ENCODE measurements at regions of chr2 and their contacts with region 1.

Region 1: DNA sequence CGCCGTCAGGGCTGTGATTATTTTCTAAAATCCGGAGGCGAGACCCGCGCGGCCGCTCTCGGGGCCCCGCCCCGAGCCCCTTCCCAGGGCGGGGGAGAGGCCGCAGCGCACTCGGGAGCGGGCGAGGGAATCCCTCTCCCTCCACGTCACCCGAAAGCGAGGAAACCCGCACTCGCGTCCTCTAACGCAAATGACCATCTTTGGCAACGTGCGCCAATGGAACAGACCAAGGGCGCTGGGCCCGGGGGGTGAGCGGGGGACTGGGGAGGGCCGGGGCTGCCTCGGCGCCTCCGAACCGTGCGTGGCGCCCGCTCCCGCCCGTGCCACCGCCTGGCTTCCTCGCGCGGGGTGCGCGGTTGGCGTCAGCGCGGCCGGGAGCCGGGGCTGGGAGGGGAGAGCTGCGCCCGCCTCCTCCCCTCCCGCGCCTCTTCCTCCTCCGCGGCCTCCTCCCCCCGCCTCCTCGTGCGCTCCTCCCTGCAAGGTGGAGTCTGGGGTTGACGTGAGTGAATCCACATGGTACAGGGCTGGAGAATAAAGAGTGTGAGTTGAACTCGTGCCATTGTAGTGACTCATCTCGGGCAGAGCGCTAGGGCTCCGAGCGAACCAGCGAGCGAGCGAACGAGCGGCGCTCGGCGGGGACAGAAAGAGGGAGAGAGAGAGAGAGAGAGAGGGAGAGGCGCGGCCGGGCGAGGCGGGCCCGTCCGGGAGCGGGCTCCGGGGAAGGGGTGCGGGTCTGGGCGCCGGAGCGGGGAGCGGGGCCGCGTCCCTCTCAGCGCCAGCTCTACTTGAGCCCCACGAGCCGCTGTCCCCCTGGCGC is at the start of gene FOSL2:
- DNase-seq: peak; percentile 81 to 86
- H3K4me3 ChIP-seq: peak within 1 kb of the TSS; percentile 51 to 94 (median 69)
- H3K27ac ChIP-seq: no peak within 1 kb of the TSS
- H3K4me1 ChIP-seq: peaks cover 9 to 19% (median 12%) of the 10 kb centered on the region in 4 experiments
- H3K27me3 ChIP-seq: peaks cover 19 to 57% (median 45%) of the 10 kb centered on the region in 4 experiments
- CTCF ChIP-seq: no peak
- EP300 ChIP-seq: 0 out of 3 replicates have a peak, but pooled peaks of 1 of the 2 experiments have one; percentile 20
- POLR2A ChIP-seq: peak in 1 of 2 experiments; percentile 21; a peak in 1 of 3 replicates
- RAD21 ChIP-seq: peak in 1 of 2 experiments; percentile 7; a peak in 1 of 4 replicates
- total RNA-seq, gene FOSL2: 4.5 and 5.5 TPM in 2 replicates

Region 2: DNA sequence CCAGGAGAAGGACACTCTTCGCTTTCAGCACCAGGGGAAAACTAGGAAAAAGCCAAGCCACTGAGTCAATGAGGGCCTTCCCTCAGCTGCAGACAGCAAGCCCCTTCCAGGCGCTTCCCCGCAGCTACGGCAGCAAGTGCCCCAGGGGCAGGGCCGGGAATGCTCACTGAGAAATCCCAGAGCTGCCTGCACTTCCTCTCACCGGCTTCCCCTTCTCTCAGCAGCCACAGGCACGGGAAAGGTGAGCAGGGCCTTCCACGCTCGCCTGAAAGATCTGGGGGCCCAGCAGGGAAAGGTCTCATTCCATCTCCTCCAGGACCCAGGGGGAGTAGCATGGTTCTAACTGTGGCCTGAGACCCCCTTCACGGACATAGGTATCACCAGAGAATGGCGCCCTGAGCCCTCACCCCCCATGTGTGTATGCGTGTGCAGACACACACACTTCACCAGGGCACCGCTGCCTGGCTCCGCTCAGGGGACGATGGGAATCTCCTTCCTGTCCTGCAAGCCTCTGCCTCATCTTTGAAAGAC is 29.4 kb before region 1 on chr2:
- CTCF ChIA-PET with region 1: interaction called, 4 read pairs
- POLR2A ChIA-PET with region 1: interaction called, 12 read pairs
- DNase-seq: no peak
- H3K4me3 ChIP-seq: no peak overlapping the region
- H3K27ac ChIP-seq: no peak overlapping the region
- H3K4me1 ChIP-seq: peaks cover 0 to 3% (median 0%) of the 10 kb centered on the region in 4 experiments; a peak in 1 of 7 replicates
- H3K27me3 ChIP-seq: no peaks in the 10 kb centered on the region; a peak in 1 of 7 replicates
- CTCF ChIP-seq: no peak
- EP300 ChIP-seq: no peak
- POLR2A ChIP-seq: no peak
- RAD21 ChIP-seq: no peak

Region 3: DNA sequence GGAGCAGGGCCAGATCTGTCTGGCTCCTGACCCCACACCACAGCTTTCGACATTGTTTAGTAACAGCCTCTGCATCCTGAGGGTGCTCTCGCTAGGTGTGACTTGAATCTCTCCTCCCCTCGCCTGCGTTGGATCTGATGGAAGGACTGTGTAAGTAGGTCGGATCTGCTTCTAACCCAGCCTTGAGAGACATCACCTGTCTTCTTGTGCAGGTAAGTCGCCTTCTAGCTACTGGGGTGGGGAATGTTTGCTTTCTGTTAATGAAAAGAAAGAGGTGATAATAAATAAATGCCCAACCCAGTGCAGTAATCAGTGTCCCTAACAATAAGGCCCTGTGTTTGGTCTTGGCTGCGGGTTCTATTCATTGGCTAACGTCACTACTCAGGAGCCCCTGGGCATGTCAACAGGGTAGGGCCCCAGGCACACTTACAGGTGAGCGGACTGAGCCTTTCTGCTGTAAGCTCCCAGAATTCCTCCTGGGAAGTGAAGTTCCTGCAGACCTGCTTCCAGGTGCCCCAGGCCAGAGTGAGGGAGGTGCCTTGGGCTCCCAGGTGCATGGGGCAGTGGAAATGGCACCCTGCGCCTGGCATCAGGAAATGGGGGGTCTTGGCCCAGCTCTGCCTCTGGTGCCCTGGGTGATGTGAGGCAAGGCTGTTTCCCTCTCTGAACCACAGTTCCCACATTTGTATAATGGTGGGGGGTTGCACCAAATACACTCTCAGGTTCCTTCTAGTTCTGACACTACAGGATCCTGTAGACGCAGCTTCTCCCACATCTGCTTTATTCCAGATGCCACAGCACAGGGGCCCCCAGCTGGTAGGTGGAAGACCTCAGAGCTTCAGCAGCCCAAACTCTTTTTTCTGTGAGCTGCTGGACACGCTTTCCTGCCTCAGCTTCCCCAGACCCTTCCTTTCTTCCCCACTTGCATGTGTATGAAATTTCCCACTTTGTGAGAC is 11.0 kb before region 1 on chr2:
- CTCF ChIA-PET with region 1: interaction called, 5 read pairs
- POLR2A ChIA-PET with region 1: interaction called, 16 read pairs
- DNase-seq: no peak
- H3K4me3 ChIP-seq: no peak overlapping the region
- H3K27ac ChIP-seq: no peak overlapping the region
- H3K4me1 ChIP-seq: peaks cover 0 to 3% (median 3%) of the 10 kb centered on the region in 4 experiments; a peak in 2 of 7 replicates
- H3K27me3 ChIP-seq: peaks cover 0 to 23% (median 11%) of the 10 kb centered on the region in 4 experiments; a peak in 4 of 7 replicates
- CTCF ChIP-seq: no peak
- EP300 ChIP-seq: no peak
- POLR2A ChIP-seq: no peak
- RAD21 ChIP-seq: no peak

Region 4: DNA sequence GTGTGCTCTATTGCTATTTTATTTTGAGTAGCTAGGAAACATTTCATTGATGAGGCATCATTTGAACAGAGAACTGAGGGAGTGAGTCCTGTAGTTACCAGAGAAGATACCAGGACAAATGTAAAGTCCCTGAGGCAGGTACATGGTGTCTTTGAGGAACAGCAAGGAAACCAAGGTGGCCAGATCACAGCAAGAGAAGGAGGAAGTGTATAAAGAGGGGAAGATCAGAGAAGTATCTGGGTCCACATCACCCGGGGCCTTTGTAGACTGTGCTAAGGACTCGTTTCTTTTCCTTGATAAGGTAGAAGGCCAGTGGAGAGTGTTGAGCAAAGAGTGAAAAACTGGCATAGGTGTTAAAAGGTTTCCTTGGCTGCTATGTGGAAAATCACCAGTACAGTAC is 68.6 kb after region 1 on chr2:
- CTCF ChIA-PET with region 1: no interaction called
- POLR2A ChIA-PET with region 1: no interaction called
- DNase-seq: no peak
- H3K4me3 ChIP-seq: no peak overlapping the region
- H3K27ac ChIP-seq: no peak overlapping the region
- H3K4me1 ChIP-seq: no peaks in the 10 kb centered on the region
- H3K27me3 ChIP-seq: no peaks in the 10 kb centered on the region
- CTCF ChIP-seq: no peak
- EP300 ChIP-seq: no peak
- POLR2A ChIP-seq: no peak
- RAD21 ChIP-seq: no peak

Region 5: DNA sequence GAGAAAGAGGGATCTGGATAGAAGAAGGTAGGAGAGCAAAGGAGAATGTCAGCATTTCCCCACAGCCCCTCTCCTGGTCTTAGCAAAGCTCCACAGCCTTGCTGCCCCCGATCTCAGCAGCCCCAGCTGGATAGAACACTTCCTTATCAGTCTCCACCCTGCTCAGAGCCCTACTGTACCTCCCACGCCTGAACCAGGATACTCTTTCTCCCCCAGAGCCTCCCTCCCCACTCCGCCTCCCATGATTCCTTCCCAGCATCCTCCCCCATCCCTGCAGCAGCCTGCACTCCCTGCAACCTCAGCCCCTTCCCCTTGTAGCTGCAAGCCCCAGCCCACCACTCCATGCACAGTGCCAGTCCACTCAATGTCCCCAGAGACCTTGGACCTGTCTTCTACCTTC is 129.2 kb after region 1 on chr2:
- CTCF ChIA-PET with region 1: no interaction called
- POLR2A ChIA-PET with region 1: no interaction called
- DNase-seq: no peak
- H3K4me3 ChIP-seq: no peak overlapping the region
- H3K27ac ChIP-seq: no peak overlapping the region
- H3K4me1 ChIP-seq: no peaks in the 10 kb centered on the region
- H3K27me3 ChIP-seq: no peaks in the 10 kb centered on the region; a peak in 1 of 7 replicates
- CTCF ChIP-seq: no peak
- EP300 ChIP-seq: no peak
- POLR2A ChIP-seq: no peak
- RAD21 ChIP-seq: no peak

Measured in H1 (cell line).